CD4-positive, alpha-beta memory T cell (primary cell): ENCODE measurements at regions of chr14 and their contacts with region 1.

Region 1: GRCh38 chr14:75307700-75308379 is 29.2 kb downstream of the FOS start:
- DNase-seq: peak; percentile 56 to 68 (median 63)
- H3K4me3 ChIP-seq: no peak overlapping the region
- H3K4me3 Mint-ChIP-seq: peak overlapping the region in 1 of 8 donors; percentile 26
- H3K27ac ChIP-seq: no peak overlapping the region
- H3K27ac Mint-ChIP-seq: no peak overlapping the region
- H3K4me1 ChIP-seq: peaks cover 6% of the 10 kb centered on the region
- H3K4me1 Mint-ChIP-seq: peaks cover 4 to 19% (median 8%) of the 10 kb centered on the region in 4 donors
- H3K27me3 ChIP-seq: no peaks in the 10 kb centered on the region
- H3K27me3 Mint-ChIP-seq: peaks cover 1 to 3% of the 10 kb centered on the region in 2 donors

Region 2: DNA sequence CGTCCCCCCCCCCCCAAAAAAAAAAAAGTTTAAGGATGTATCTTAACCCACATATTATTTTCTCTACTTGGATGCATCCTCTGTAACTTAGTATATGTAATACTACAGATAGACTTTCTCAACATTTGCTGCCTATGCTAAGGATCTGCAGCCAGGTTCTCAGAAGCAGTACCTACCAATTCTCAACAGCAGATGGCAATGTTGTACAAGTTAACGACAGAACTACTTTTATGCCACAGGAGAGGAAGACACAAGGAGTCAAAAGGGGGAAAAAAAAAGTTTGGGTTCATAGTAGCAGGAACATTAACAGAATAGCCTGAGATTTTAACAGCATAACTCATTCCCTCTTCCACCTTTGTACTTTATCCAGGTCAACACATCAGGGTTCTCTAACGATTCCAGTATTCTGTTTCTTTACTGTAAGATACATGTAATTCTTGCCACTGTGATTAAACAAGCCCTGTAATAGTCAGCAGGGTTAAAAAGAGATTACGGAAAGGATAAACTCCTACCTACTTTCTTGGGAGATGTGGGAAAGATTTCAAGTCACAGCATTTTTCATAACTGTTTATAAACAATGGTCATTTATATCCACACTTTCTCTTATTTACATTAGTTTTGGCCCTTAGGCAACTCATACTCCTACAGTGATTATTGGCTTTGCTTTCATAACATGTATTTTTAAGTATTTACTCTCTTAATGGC is 175.3 kb before region 1 on chr14:
- CTCF ChIA-PET with region 1: interaction called, 273 read pairs
- POLR2A ChIA-PET with region 1: interaction called, 3 read pairs
- intact Hi-C with region 1: loop called (anchors 1 kb)
- DNase-seq: peak; percentile 65 to 76 (median 74)
- H3K4me3 ChIP-seq: no peak overlapping the region
- H3K4me3 Mint-ChIP-seq: peak overlapping the region in 1 of 8 donors; percentile 5
- H3K27ac ChIP-seq: no peak overlapping the region
- H3K27ac Mint-ChIP-seq: peak overlapping the region; percentile 10 to 90 (median 72)
- H3K4me1 ChIP-seq: peaks cover 12% of the 10 kb centered on the region
- H3K4me1 Mint-ChIP-seq: peaks cover 13 to 18% (median 17%) of the 10 kb centered on the region in 4 donors
- H3K27me3 ChIP-seq: no peaks in the 10 kb centered on the region
- H3K27me3 Mint-ChIP-seq: no peaks in the 10 kb centered on the region

Region 3: GRCh38 chr14:75176142-75176820 is 131.6 kb before region 1 on chr14 and contains the start of gene TMED10:
- CTCF ChIA-PET with region 1: no interaction called
- POLR2A ChIA-PET with region 1: no interaction called
- intact Hi-C with region 1: no loop called
- DNase-seq: peak; percentile 95 to 96 (median 95)
- H3K4me3 ChIP-seq: peak within 1 kb of the TSS; percentile 78 to 84
- H3K4me3 Mint-ChIP-seq: peak within 1 kb of the TSS; percentile 83 to 97 (median 94)
- H3K27ac ChIP-seq: peak within 1 kb of the TSS; percentile 99
- H3K27ac Mint-ChIP-seq: peak within 1 kb of the TSS; percentile 98 to 99 (median 98)
- H3K4me1 ChIP-seq: peaks cover 38% of the 10 kb centered on the region
- H3K4me1 Mint-ChIP-seq: peaks cover 28 to 57% (median 44%) of the 10 kb centered on the region in 4 donors
- H3K27me3 ChIP-seq: no peaks in the 10 kb centered on the region
- H3K27me3 Mint-ChIP-seq: no peaks in the 10 kb centered on the region
- total RNA-seq, gene TMED10: 202 to 217 TPM

Region 4: GRCh38 chr14:75283162-75283881 is 24.5 kb before region 1 on chr14:
- CTCF ChIA-PET with region 1: no interaction called
- POLR2A ChIA-PET with region 1: no interaction called
- intact Hi-C with region 1: no loop called
- DNase-seq: peak; percentile 63 to 76 (median 66)
- H3K4me3 ChIP-seq: no peak overlapping the region
- H3K4me3 Mint-ChIP-seq: peak overlapping the region in 5 of 8 donors; percentile 4 to 76 (median 48)
- H3K27ac ChIP-seq: no peak overlapping the region
- H3K27ac Mint-ChIP-seq: peak overlapping the region in 6 of 7 donors; percentile 1 to 99 (median 90)
- H3K4me1 ChIP-seq: peaks cover 15% of the 10 kb centered on the region
- H3K4me1 Mint-ChIP-seq: peaks cover 13 to 53% (median 23%) of the 10 kb centered on the region in 4 donors
- H3K27me3 ChIP-seq: peaks cover 6% of the 10 kb centered on the region
- H3K27me3 Mint-ChIP-seq: peaks cover 3 to 26% of the 10 kb centered on the region in 2 donors

Region 5: GRCh38 chr14:75452900-75453747 is 145.3 kb after region 1 on chr14:
- CTCF ChIA-PET with region 1: interaction called, 11 read pairs
- POLR2A ChIA-PET with region 1: no interaction called
- intact Hi-C with region 1: loop called (anchors 1 kb)
- DNase-seq: no peak
- H3K4me3 ChIP-seq: no peak overlapping the region
- H3K4me3 Mint-ChIP-seq: no peak overlapping the region
- H3K27ac ChIP-seq: no peak overlapping the region
- H3K27ac Mint-ChIP-seq: peak overlapping the region in 1 of 7 donors; percentile 63
- H3K4me1 ChIP-seq: no peaks in the 10 kb centered on the region
- H3K4me1 Mint-ChIP-seq: no peaks in the 10 kb centered on the region
- H3K27me3 ChIP-seq: no peaks in the 10 kb centered on the region
- H3K27me3 Mint-ChIP-seq: no peaks in the 10 kb centered on the region

Region 6: GRCh38 chr14:75497191-75497590 is 189.4 kb after region 1 on chr14:
- CTCF ChIA-PET with region 1: interaction called, 121 read pairs
- POLR2A ChIA-PET with region 1: no interaction called
- intact Hi-C with region 1: no loop called
- DNase-seq: no peak
- H3K4me3 ChIP-seq: no peak overlapping the region
- H3K4me3 Mint-ChIP-seq: no peak overlapping the region
- H3K27ac ChIP-seq: no peak overlapping the region
- H3K27ac Mint-ChIP-seq: peak overlapping the region in 3 of 7 donors; percentile 58 to 75 (median 59)
- H3K4me1 ChIP-seq: no peaks in the 10 kb centered on the region
- H3K4me1 Mint-ChIP-seq: peaks cover 4 to 16% (median 8%) of the 10 kb centered on the region in 4 donors
- H3K27me3 ChIP-seq: no peaks in the 10 kb centered on the region
- H3K27me3 Mint-ChIP-seq: no peaks in the 10 kb centered on the region

Region 7: GRCh38 chr14:77120771-77121743 is 1813.2 kb after region 1 on chr14:
- CTCF ChIA-PET with region 1: no interaction called
- POLR2A ChIA-PET with region 1: no interaction called
- intact Hi-C with region 1: no loop called
- DNase-seq: peak; percentile 27 to 79 (median 67)
- H3K4me3 ChIP-seq: peak overlapping the region; percentile 6 to 12
- H3K4me3 Mint-ChIP-seq: peak overlapping the region; percentile 43 to 91 (median 78)
- H3K27ac ChIP-seq: peak overlapping the region; percentile 71
- H3K27ac Mint-ChIP-seq: peak overlapping the region; percentile 93 to 99 (median 95)
- H3K4me1 ChIP-seq: peaks cover 61% of the 10 kb centered on the region
- H3K4me1 Mint-ChIP-seq: peaks cover 16 to 61% (median 44%) of the 10 kb centered on the region in 4 donors
- H3K27me3 ChIP-seq: no peaks in the 10 kb centered on the region
- H3K27me3 Mint-ChIP-seq: no peaks in the 10 kb centered on the region